ENCODE measurements at regions of chr12 and their contacts with region 1.

Region 1: DNA sequence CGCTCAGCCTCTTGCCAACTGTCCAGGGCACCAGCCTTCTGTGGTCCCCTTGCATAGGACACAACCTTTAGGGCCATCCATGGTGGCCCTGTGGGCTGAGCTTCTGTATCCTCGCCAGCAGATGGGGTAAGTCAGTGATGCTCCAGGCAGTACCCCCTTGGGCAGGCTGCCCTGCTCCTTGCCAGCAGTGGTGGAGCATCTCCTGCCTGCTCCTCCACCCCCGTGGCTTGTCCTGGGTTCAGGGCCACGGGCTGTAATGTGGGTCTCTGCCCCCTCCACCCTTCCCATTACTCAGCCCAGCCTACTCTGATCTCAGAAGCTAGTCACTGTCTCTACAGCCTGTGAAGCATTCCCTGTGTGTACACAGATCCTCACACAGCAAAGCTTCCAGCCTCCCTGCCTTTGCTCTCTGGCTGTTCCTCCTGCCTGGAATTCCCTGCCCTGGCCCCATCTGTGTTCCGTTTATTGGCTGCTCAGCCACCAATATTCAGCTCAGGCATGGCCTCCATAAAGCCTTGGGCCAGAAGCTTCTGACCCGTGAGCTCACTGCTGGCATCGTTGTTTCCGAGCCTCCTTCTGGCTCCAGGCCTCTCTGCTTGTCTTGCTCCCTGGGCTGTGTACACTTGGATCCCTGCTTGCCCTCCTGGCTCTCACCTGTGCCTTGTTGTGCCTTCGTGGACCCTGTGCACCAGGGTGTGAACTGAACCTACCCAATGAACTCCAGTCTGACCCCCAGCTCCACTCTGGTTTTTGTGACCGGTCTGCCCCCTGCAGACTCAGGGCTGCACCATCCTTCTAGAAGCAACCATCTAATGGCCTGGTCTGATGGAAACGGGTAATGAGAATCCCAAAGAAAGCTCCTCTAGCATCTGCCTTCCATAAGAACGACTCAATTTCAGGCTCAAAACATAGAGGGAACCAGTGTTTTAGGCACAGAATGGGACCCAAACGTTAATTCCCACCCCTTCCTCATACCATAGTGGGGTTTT is 177.0 kb upstream of the PRMT8 start:
- DNase-seq: no peak
- H3K4me3 ChIP-seq: no peak overlapping the region
- H3K27me3 ChIP-seq: no peaks in the 10 kb centered on the region; the same call in 1 of the 2 replicates
- CTCF ChIP-seq: peak; percentile 54; the same call in 1 of the 2 replicates

Region 2: GRCh38 chr12:3333583-3333982 is 19.6 kb after region 1 on chr12:
- CTCF ChIA-PET with region 1: interaction called, 15 read pairs
- POLR2A ChIA-PET with region 1: no interaction called
- DNase-seq: no peak
- H3K4me3 ChIP-seq: no peak overlapping the region
- H3K27me3 ChIP-seq: peaks cover 4% of the 10 kb centered on the region; the same call in 1 of the 2 replicates
- CTCF ChIP-seq: no peak

Region 3: DNA sequence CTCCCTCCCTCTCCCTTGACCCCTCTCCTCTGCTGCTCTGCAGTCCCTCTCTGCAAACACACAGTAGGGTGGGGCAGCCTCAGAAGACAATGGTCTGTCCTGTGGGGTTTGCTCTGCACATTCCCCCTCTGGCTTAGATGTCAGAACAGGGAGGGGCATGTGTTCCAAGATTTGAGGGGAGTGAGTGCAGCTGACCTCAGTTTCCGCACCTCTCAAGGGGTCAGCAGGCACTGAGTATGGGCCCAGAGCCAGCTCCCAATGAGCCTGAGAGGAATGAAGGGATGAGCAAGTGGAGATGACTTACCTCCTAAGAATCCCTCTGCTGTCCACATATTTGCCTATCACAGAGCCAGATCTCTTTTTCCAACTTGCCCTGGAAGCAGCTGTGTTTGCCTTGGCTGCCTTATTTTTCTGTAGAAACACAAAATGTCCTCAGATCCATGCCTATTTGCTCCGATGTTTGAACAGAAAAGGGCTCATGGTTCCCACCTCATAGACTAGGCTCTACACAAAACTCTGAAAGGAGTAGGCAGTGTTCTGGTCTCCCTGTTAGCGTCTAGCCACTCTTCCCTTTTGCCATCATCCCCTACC is 327.6 kb after region 1 on chr12:
- CTCF ChIA-PET with region 1: no interaction called
- POLR2A ChIA-PET with region 1: no interaction called
- DNase-seq: peak; percentile 32
- H3K4me3 ChIP-seq: no peak overlapping the region
- H3K27me3 ChIP-seq: no peaks in the 10 kb centered on the region
- CTCF ChIP-seq: no peak

Region 4: DNA sequence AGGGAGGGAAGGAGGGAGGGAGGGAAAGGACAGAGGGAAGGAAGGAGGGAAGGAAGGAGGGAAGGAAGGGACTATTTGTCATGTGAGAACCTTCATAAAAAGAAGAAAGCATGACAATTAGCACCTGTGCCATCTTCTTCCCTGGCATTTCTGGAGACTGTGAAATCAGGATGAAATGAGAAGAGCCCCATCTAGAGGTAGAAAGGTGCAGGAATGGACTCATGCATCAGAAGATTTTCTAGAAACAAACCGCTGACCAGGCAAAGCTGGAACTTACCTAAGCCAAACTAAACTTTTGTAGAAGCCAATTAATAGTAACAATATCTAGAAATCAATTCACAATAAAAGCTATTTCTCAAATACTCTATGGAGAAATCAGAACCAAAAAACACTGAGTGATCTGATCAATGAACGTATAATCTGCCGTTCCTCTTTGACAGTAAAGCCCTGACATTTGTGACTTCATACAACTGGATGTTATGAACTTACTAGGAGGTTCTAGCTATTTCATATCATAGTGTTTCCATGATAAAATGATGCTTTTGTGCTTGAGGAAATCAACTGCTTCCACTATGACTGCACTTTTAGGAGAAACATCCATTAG is 463.3 kb after region 1 on chr12:
- CTCF ChIA-PET with region 1: interaction called, 14 read pairs
- POLR2A ChIA-PET with region 1: interaction called, 3 read pairs
- DNase-seq: no peak
- H3K4me3 ChIP-seq: no peak overlapping the region
- H3K27me3 ChIP-seq: peaks cover 4% of the 10 kb centered on the region; the same call in 1 of the 2 replicates
- CTCF ChIP-seq: peak; percentile 78

Region 5: GRCh38 chr12:3803865-3804472 is 490.0 kb after region 1 on chr12:
- CTCF ChIA-PET with region 1: interaction called, 11 read pairs
- POLR2A ChIA-PET with region 1: no interaction called
- DNase-seq: no peak
- H3K4me3 ChIP-seq: no peak overlapping the region
- H3K27me3 ChIP-seq: no peaks in the 10 kb centered on the region
- CTCF ChIP-seq: peak; percentile 87